MCF 10A (cell line): ENCODE measurements at regions of chr12 and their contacts with region 1.

Region 1: DNA sequence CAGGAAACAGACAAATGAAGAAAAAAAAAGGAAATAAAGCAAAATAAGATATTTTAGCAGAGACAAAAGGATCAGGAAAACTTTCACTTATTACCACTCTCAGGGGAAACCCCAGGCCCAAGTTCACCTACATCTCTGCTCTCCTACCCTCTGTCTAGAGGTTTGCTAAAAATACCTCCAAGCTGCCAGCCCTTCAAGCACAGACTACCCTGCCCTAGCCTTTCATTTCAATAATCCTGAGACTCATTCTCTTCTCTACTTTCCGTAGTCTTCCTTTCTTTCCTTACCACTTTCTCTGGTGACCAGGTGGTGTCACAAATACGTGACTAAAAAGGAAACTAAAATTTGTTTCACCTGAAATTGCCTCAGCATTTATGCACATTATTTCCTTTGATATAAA is 33.8 kb downstream of the RPAP3 start:
- DNase-seq: no peak
- H3K4me3 Mint-ChIP-seq: no peak overlapping the region
- H3K27ac Mint-ChIP-seq: peak overlapping the region; percentile 5
- H3K4me1 Mint-ChIP-seq: no peaks in the 10 kb centered on the region
- H3K27me3 Mint-ChIP-seq: no peaks in the 10 kb centered on the region
- CTCF ChIP-seq: no peak

Region 2: DNA sequence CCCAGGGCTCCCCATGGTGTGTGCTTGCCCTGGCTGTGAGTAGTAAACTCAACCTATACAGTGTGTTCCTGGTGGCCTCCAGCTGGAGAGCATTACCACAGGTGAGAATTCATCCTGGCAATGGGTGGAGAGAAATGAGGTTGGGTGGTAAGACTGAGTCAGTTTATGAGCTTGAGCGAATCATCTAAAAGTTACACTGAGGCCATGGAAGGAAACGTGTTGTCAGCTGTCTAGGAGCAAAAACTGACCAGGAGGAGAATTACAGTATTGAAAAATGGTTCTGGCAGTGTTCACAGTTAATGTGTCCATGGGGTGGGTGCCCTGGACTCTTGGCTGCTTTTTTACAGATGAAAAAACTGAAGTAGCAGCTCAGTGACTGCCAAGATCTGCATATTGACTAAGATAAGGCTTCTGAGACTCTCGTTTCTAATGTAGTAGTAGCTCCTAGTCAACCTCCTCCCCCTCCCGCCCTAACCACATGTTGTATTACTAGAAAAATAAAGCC is 390.3 kb before region 1 on chr12:
- CTCF ChIA-PET with region 1: no interaction called
- POLR2A ChIA-PET with region 1: no interaction called
- intact Hi-C with region 1: no loop called
- DNase-seq: no peak
- H3K4me3 Mint-ChIP-seq: no peak overlapping the region
- H3K27ac Mint-ChIP-seq: no peak overlapping the region
- H3K4me1 Mint-ChIP-seq: peaks cover 20% of the 10 kb centered on the region
- H3K27me3 Mint-ChIP-seq: no peaks in the 10 kb centered on the region
- CTCF ChIP-seq: no peak

Region 3: GRCh38 chr12:47705566-47706425 is 33.7 kb after region 1 on chr12 and contains the start of gene RPAP3:
- CTCF ChIA-PET with region 1: interaction called, 4 read pairs
- POLR2A ChIA-PET with region 1: interaction called, 10 read pairs
- intact Hi-C with region 1: no loop called
- DNase-seq: peak; percentile 93
- H3K4me3 Mint-ChIP-seq: peak within 1 kb of the TSS; percentile 88
- H3K27ac Mint-ChIP-seq: peak within 1 kb of the TSS; percentile 90
- H3K4me1 Mint-ChIP-seq: peaks cover 30% of the 10 kb centered on the region
- H3K27me3 Mint-ChIP-seq: no peaks in the 10 kb centered on the region
- CTCF ChIP-seq: peak; percentile 59
- total RNA-seq, gene RPAP3: 16.2 and 22.5 TPM in 2 replicates